ENCODE measurements at regions of chr11 and their contacts with region 1.

Region 1: DNA sequence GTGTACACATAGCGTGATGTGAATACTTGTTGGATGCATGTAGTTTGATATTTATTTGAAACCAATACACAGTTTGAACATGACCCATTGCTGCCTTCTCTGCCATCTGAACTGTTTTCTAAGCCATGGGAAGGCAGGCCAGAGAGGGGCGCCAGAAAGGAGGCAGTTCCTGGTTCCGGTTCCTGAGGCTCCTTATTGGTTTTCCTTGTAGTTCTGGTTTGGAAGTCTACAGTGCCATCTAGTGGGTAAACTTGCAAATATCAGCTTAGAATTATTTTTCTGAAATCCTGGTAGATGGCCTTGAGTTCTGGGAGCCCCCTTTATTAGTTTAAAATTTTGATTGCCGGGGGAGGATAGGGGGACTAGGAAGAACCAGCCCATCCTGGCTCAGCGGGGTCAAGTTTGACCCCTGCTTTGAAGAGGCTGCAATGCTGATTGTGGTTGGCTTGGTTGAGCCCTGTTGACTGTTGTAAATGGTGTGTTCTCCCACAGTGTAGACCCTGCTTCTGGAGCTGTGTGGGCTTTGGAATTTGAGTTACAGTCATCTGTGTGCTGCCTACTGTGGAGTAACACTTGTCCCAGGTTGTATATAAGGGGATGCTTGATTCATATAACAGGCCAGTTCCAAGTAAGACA is 48.4 kb downstream of the GRAMD1B start:
- DNase-seq: peak; percentile 42
- H3K4me3 ChIP-seq: no peak overlapping the region
- H3K27ac ChIP-seq: no peak overlapping the region
- H3K4me1 ChIP-seq: peaks cover 0 to 5% (median 0%) of the 10 kb centered on the region in 4 donors
- H3K27me3 ChIP-seq: no peaks in the 10 kb centered on the region
- CTCF ChIP-seq: peak; percentile 70 to 79 (median 71)
- EP300 ChIP-seq: no peak
- POLR2A ChIP-seq: no peak

Region 2: DNA sequence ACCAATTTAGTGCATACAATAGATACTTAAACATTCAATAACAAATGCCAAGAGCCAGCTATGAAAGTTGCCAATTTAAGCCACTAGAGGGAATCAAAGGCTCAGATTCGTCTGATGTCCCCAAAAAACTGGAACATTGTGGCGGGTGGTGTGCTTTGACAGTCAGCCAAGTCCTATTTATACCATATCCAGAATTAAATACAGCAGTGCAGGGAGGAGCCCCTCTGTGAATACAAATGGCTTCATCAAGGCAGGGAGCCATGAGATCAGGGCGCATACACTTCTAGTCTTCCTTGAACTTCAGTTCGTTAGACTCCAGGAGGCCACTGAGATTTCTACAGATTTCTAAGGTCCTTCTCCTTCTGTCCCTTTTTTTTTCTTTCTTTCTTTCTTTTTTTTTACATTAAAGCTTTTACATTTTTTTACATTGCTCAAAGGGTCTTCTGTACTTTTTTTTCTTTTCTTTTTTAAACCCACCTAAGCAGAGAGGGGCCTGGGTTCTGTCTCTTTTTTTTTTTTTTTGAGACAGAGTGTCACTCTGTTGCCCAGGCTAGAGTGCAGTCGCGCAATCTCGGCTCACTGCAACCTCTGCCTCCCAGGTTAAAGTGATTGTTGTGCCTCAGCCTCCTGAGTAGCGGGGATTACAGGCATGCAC is 375.0 kb before region 1 on chr11:
- in situ Hi-C with region 1: loop called in 1 of 4 experiments (anchors 25 kb)
- intact Hi-C with region 1: no loop called
- DNase-seq: peak; percentile 30
- H3K4me3 ChIP-seq: no peak overlapping the region
- H3K27ac ChIP-seq: peak overlapping the region; percentile 38 to 67 (median 62)
- H3K4me1 ChIP-seq: peaks cover 10 to 22% (median 12%) of the 10 kb centered on the region in 4 donors
- H3K27me3 ChIP-seq: no peaks in the 10 kb centered on the region
- CTCF ChIP-seq: peak; percentile 46 to 65 (median 51)
- EP300 ChIP-seq: no peak
- POLR2A ChIP-seq: no peak

Region 3: GRCh38 chr11:123301696-123302400 is 176.6 kb before region 1 on chr11:
- in situ Hi-C with region 1: loop called (anchors 5 to 25 kb)
- intact Hi-C with region 1: loop called (anchors 5 kb)
- DNase-seq: peak; percentile 63
- H3K4me3 ChIP-seq: peak overlapping the region; percentile 20 to 54 (median 36)
- H3K27ac ChIP-seq: no peak overlapping the region
- H3K4me1 ChIP-seq: peaks cover 8 to 13% (median 10%) of the 10 kb centered on the region in 4 donors
- H3K27me3 ChIP-seq: peaks cover 28% of the 10 kb centered on the region
- CTCF ChIP-seq: peak; percentile 36 to 91 (median 84)
- EP300 ChIP-seq: no peak
- POLR2A ChIP-seq: no peak

Region 4: DNA sequence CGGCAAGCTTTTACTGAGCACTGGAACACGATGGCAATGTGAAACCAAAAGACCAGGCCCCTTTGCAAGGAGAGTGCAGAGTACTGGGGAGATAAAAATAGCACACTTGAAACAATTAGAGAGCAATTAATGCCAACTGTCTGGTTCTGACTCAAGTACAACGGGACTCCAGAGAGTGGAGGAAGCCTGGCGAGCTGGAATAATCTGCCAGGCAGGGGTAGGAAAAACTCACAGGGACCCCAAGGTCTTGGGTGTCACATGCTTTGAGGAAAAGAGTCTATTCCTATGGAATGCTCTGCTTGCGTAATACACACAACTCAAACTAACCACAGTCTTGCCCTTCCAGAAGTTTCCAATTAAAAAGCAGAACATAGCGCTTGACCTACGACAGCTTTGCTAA is 170.4 kb before region 1 on chr11:
- in situ Hi-C with region 1: loop called (anchors 5 to 25 kb)
- intact Hi-C with region 1: loop called (anchors 5 kb)
- DNase-seq: no peak
- H3K4me3 ChIP-seq: no peak overlapping the region
- H3K27ac ChIP-seq: no peak overlapping the region
- H3K4me1 ChIP-seq: peaks cover 0 to 5% (median 0%) of the 10 kb centered on the region in 4 donors
- H3K27me3 ChIP-seq: no peaks in the 10 kb centered on the region
- CTCF ChIP-seq: no peak
- EP300 ChIP-seq: no peak
- POLR2A ChIP-seq: no peak

Region 5: GRCh38 chr11:123407130-123407995 is 71.1 kb before region 1 on chr11:
- in situ Hi-C with region 1: loop called in 2 of 4 experiments (anchors 5 to 10 kb)
- intact Hi-C with region 1: no loop called
- DNase-seq: peak; percentile 79
- H3K4me3 ChIP-seq: no peak overlapping the region
- H3K27ac ChIP-seq: no peak overlapping the region
- H3K4me1 ChIP-seq: peaks cover 0 to 32% (median 7%) of the 10 kb centered on the region in 4 donors
- H3K27me3 ChIP-seq: peaks cover 13% of the 10 kb centered on the region
- CTCF ChIP-seq: peak; percentile 52 to 79 (median 69)
- EP300 ChIP-seq: no peak
- POLR2A ChIP-seq: no peak

Region 6: DNA sequence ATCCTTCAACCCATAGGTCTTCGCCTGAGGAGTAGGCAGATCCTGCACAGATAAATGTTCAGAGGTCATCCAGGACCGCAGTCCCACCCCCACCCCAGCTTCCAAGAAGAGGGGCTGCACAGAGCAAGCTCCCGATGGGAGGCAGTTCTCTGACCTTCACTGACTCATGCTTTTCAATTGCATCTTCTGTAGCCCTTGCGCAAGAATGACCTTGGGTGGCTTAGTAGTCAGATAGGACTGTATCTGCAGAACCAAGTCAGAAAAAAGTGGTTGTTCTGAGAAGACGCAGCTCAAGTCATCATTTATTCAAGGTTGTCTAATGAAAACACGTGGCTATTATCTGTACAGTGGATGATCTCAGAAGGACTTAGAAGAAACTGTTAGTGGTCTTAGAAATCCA is 64.8 kb before region 1 on chr11:
- in situ Hi-C with region 1: loop called in 2 of 4 experiments (anchors 5 to 10 kb)
- intact Hi-C with region 1: no loop called
- DNase-seq: no peak
- H3K4me3 ChIP-seq: no peak overlapping the region
- H3K27ac ChIP-seq: no peak overlapping the region
- H3K4me1 ChIP-seq: peaks cover 0 to 13% (median 4%) of the 10 kb centered on the region in 4 donors
- H3K27me3 ChIP-seq: no peaks in the 10 kb centered on the region
- CTCF ChIP-seq: no peak
- EP300 ChIP-seq: no peak
- POLR2A ChIP-seq: no peak

Measured in transverse colon (tissue), 4 donors.